ENCODE measurements at regions of chr3 and their contacts with region 1.

Region 1: DNA sequence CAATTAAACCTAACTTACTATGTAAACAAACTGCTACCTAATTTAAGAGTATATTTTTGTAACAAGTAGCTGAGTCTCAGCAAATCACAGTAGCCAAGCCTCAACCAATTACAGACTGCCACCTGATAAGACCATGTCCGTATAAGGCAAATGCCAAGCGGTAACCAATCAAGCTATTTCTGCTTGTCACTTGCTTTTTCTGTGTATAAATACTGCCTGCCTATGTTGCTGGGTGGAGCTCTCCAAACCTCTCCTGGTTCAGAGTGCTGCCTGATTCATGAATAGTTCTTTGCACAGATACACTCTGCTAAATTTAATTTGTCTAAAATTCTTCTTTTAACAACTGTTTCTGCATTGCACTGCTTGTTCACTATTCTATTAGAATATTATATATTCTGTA is 42.6 kb downstream of the ZNF148 start:
- DNase-seq: no peak
- H3K4me3 Mint-ChIP-seq: no peak overlapping the region
- H3K27ac Mint-ChIP-seq: no peak overlapping the region
- H3K4me1 Mint-ChIP-seq: peaks cover 19% of the 10 kb centered on the region
- H3K27me3 Mint-ChIP-seq: no peaks in the 10 kb centered on the region

Region 2: GRCh38 chr3:125257536-125257935 is 75.0 kb before region 1 on chr3:
- intact Hi-C with region 1: loop called (anchors 2 kb)
- DNase-seq: no peak
- H3K4me3 Mint-ChIP-seq: no peak overlapping the region
- H3K27ac Mint-ChIP-seq: no peak overlapping the region
- H3K4me1 Mint-ChIP-seq: peaks cover 10% of the 10 kb centered on the region
- H3K27me3 Mint-ChIP-seq: no peaks in the 10 kb centered on the region

Region 3: DNA sequence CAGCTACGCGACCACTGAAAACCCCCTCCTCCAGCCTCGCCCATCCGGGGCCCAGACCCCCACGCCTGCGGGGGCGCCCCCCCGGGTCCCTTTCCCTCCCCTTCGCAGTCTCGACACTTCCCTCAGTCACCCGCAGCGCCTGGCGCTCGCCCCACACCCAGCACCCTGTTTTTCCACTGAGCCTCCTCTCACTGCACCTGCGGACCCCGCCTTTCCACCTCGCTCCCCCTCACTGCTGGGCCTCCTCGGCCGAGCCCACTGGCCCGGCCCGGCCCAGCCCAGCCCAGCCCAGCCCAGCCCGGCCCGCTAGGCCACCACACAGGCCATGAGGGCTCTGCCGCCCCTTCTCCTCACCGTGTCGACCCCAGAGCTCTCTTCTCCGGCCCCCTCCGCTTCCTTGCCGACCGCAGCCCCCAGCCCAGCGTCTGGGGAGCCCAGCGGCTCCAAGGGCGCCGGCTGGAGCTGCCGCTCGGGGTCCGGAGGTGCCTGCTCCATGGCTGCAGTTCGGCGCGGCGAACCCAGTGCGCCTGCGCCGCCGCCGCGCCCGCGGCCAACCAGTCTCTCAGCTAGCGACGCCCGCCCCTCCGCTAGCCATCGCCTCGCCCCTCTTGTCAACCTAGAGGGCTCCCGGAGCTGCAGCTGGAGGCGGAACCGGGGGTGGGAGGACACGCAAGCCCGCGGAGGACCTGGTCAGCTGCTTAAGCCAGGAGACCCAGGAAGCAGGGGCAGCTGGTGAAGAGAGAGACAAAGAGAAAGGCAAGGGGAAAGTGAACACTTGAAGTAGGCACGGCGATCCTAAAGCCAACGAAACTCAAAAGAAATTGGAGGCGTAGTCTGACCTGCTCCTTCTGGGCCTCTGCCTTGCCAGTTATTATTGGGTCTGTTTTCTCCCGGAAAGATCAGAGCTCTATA is 187.4 kb after region 1 on chr3 and contains the start of gene SNX4:
- intact Hi-C with region 1: no loop called
- DNase-seq: peak; percentile 85
- H3K4me3 Mint-ChIP-seq: peak within 1 kb of the TSS; percentile 98
- H3K27ac Mint-ChIP-seq: peak within 1 kb of the TSS; percentile 74
- H3K4me1 Mint-ChIP-seq: peaks cover 28% of the 10 kb centered on the region
- H3K27me3 Mint-ChIP-seq: no peaks in the 10 kb centered on the region
- total RNA-seq, gene SNX4: 40.7 and 44.4 TPM in 2 replicates

Measured in activated T-helper 1 cell treated with anti-CD3 and anti-CD28 coated beads, Interleukin-12 subunit alpha, Interleukin-12 subunit beta, Interleukin-2, Interleukin-4 antibody, amounts not matched to agents 30 ng/mL and 10 ng/mL and 1 ng/mL, durations not matched to agents 14 hours and 24 hours and 36 hours (primary cell).